ENCODE measurements at regions of chr3 and their contacts with region 1.

Region 1: DNA sequence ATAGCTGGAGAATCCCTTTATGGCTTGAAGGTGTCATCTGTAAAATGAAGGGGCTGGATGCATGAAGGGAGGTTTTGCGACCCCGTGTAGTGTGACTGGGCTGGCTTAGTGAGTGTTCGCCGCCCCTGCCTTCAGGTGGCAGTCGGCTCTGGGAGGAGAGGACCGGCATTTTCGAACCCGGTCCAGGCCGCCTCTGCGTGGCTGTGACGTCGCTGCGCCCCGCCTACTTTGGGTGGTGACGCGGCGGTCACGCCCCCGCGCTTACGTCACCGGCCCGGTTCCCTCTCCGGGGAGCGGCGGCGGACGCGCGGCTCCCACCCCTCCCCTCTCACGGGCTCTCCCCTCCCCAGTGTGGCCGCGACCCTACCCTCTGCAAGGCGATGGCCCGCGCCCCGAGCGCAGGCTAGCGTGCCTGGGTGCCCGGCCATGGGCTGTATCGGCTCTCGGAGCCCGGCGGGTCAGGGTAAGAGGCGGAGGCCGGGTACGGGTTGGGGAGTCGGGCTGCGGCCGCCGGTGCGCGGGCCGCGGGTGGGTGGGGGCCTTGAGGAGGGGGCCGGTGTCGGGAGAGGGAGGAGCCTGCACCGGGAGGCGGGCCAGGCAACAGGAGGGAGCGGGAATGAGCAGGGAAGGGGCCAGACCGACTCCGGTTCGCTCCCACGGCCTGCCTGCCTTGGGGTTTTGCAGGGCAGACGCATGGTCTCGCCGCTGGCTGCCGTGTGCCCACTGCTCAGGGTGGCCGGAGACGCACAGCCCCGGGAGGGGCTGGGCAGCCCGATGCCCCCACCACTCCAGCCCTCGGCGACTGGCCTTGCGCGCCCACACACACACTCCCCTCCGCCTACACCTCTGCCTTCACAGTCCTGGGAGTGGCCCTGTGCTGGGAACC is 1.5 kb upstream of the FAM131A start:
- DNase-seq: peak; percentile 87 to 93 (median 91)
- ATAC-seq: peak; percentile 17 to 66 (median 64)
- H3K4me3 ChIP-seq: peak overlapping the region; percentile 66 to 95 (median 86)
- H3K27ac ChIP-seq: peak overlapping the region; percentile 75 to 100 (median 96)
- H3K4me1 ChIP-seq: peaks cover 11 to 54% (median 37%) of the 10 kb centered on the region in 12 donors
- H3K27me3 ChIP-seq: no peaks in the 10 kb centered on the region
- CTCF ChIP-seq: no peak
- POLR2A ChIP-seq: peak; percentile 85

Region 2: DNA sequence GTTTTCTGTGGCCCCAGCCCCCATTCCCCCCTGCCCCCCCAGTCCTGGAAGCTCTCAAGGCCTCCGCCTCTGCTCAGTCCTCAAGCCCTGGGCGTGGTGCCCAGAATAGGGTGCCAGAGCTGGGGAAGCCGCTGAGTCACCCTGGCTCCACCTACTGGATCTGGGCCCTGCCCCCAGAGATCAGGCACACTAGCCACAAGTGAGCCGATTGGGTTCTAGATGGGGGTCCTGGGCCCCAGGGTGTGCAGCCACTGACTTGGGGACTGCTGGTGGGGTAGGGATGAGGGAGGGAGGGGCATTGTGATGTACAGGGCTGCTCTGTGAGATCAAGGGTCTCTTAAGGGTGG is 15.8 kb before region 1 on chr3:
- intact Hi-C with region 1: loop called in 4 of 10 experiments (anchors 2 kb)
- DNase-seq: peak; percentile 96 to 98 (median 96)
- ATAC-seq: peak; percentile 90 to 95 (median 92)
- H3K4me3 ChIP-seq: peak overlapping the region in 9 of 12 donors; percentile 2 to 48 (median 38)
- H3K27ac ChIP-seq: peak overlapping the region in 11 of 12 donors; percentile 78 to 93 (median 89)
- H3K4me1 ChIP-seq: peaks cover 4 to 76% (median 53%) of the 10 kb centered on the region in 12 donors
- H3K27me3 ChIP-seq: no peaks in the 10 kb centered on the region
- CTCF ChIP-seq: peak in 1 of 12 donors; percentile 22
- POLR2A ChIP-seq: no peak

Measured in heart left ventricle (tissue), 16 donors.